ENCODE measurements at regions of chr22 and their contacts with region 1.

Region 1: GRCh38 chr22:36134182-36134581 is 26.4 kb downstream of the APOL3 start:
- DNase-seq: no peak
- H3K4me3 Mint-ChIP-seq: no peak overlapping the region
- H3K27ac Mint-ChIP-seq: no peak overlapping the region
- H3K4me1 Mint-ChIP-seq: peaks cover 8% of the 10 kb centered on the region
- H3K27me3 Mint-ChIP-seq: peaks cover 4% of the 10 kb centered on the region

Region 2: DNA sequence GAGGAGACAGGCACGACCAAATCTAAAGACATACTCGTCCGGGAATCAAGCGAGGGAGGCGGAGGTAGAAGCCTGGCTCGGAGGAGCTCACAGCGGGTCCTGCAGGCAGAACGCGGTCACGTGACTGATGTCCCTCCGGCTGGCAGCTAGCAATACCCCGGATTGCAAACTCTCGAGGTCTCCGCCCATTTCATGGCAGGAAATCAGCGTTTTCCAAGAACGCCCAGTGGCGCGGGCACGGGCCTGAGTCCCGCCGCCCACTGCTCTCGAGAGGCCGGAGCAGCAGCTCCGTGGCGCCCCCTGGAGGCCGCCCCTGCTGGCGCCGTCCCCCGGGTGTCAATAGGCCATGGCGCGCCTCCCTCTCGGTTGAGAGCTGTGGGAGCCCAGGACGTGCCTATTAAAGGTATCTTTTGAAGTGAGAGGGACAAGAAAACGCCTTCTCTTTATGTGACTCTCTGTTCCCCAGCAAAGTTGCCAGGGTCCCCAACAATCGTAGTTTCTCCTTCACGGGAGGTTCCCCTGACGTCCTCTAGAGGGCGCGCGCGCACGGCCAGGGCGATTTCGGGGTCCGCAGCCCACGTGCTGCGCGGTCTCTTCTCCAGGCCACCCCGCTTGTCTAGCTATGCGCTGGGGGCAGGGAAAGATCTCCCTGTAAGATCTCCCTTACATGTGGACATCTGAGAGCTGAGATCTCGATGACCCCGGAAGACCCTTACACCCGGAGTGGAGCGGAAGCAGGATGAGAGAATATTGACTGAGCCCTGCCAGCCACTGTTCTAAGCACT is 68.2 kb before region 1 on chr22:
- intact Hi-C with region 1: no loop called
- DNase-seq: peak; percentile 59
- H3K4me3 Mint-ChIP-seq: peak overlapping the region; percentile 80
- H3K27ac Mint-ChIP-seq: peak overlapping the region; percentile 57
- H3K4me1 Mint-ChIP-seq: peaks cover 6% of the 10 kb centered on the region
- H3K27me3 Mint-ChIP-seq: peaks cover 6% of the 10 kb centered on the region

Region 3: DNA sequence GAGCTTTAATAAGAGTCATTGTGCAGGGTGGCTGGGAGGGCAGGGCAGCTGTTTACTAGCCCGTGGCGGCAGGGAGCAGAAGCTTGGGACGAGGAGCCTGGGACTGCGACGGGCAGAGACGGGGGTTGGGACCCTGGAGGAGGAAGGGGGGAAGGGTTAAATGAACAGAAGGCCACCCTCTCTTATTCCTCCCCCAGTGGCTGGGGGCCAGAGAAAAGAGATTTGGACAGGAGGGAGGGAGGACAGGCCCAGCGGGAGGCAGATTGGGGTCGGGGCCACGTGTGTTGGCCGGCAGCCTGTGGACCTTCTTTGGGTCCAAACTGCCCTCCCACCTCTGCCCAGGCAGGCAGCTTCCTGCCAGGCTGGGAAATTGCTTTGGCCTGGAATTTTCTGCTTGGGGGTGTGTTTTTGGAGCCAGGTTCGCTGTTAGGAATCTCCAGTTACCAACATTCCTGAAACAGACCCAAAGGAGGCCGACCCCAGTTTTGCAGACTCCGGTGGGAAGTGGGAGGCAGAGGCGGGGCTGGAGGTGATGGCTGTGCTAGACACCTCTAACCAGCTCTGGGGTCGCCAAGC is 23.8 kb before region 1 on chr22:
- intact Hi-C with region 1: no loop called
- DNase-seq: no peak
- H3K4me3 Mint-ChIP-seq: no peak overlapping the region
- H3K27ac Mint-ChIP-seq: no peak overlapping the region
- H3K4me1 Mint-ChIP-seq: no peaks in the 10 kb centered on the region
- H3K27me3 Mint-ChIP-seq: peaks cover 4% of the 10 kb centered on the region

Region 4: GRCh38 chr22:36156515-36157419 is 22.6 kb after region 1 on chr22:
- intact Hi-C with region 1: loop called (anchors 1 kb)
- DNase-seq: peak; percentile 29
- H3K4me3 Mint-ChIP-seq: peak overlapping the region; percentile 90
- H3K27ac Mint-ChIP-seq: peak overlapping the region; percentile 95
- H3K4me1 Mint-ChIP-seq: peaks cover 74% of the 10 kb centered on the region
- H3K27me3 Mint-ChIP-seq: no peaks in the 10 kb centered on the region

Region 5: GRCh38 chr22:36439481-36440271 is 305.5 kb after region 1 on chr22:
- intact Hi-C with region 1: no loop called
- DNase-seq: no peak
- H3K4me3 Mint-ChIP-seq: no peak overlapping the region
- H3K27ac Mint-ChIP-seq: peak overlapping the region; percentile 4
- H3K4me1 Mint-ChIP-seq: peaks cover 33% of the 10 kb centered on the region
- H3K27me3 Mint-ChIP-seq: no peaks in the 10 kb centered on the region

Measured in activated T-helper 2 cell treated with anti-CD3 and anti-CD28 coated beads, Interferon-gamma antibody, Interleukin-2, Interleukin-4, amounts not matched to agents 10 μg/mL and 5 μg/mL and 100 μg/mL, durations not matched to agents 14 hours and 24 hours and 36 hours (primary cell).